WTC11 (cell line): ENCODE measurements at regions of chr2 and their contacts with region 1.

Region 1: DNA sequence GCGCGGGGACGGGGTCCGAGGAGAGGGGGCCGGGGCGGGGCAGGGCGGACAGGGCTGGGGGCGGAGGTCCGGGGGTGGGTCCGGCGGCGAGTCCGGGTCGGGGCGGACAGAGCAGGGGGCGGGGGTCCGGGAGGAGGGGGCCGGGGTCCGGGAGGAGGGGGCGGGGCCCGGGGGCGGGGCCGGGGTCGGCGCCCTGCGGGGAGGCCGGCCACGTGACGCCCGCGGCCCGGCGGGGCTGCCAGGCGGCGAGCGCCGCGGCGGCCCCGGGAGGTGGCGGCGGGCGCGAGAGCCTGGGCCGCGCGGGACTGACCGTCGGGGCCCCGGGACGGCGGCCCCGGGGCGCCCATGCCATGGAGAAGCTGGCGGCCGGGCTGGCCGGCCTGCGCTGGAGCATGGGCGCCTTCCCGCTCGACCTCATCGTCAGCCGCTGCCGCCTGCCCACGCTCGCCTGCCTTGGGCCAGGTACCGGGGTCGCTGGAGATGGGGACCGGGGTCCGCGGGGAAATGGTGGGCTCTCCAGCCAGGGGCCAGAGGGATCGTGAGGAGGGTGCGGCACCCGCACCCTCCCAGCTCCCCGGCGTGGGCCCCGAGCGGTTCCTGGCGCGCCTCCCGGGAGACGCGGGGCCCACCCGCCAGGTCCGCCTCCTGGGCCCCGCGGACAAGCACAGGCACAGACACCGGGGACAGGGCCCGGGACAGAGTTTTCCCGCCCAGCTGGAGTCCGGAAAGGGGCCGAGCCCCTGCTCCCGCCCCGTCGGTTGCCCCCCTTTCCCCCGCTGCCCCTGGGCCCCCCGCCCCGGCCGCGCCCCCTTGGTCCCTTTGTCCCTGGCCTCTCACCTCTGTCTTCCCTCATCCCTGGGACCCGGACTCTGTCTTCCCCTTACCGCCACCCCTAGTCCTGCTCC is at the start of gene GAREM2:
- DNase-seq: peak; percentile 54
- ATAC-seq: peak; percentile 11
- H3K4me3 Mint-ChIP-seq: peak within 1 kb of the TSS; percentile 73
- H3K27ac Mint-ChIP-seq: no peak within 1 kb of the TSS
- H3K4me1 Mint-ChIP-seq: peaks cover 9% of the 10 kb centered on the region
- H3K27me3 Mint-ChIP-seq: peaks cover 11% of the 10 kb centered on the region
- CTCF ChIP-seq: no peak
- total RNA-seq, gene GAREM2: 17.4 to 18.9 TPM (median 17.6 TPM) in 3 replicates

Region 2: DNA sequence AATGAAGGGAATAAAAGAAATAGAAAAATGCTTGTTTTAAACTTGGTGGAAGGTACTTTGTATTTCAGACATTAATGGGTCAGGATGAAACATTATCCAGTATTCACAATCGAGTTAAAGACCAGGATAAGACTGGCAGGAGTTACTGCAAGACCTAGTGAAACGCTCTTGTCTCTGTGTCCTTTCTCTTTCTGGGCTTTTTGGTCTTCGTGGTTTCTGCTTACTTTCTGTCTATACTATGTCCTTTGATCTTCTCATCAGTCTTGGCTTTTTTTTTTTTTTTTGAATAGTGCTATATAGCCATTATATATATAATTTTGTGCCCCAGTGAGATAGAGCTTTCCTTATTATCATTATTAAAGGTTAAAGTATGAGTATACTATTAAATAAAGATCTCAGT is 42.4 kb before region 1 on chr2:
- CTCF ChIA-PET with region 1: no interaction called
- POLR2A ChIA-PET with region 1: no interaction called
- DNase-seq: no peak
- ATAC-seq: no peak
- H3K4me3 Mint-ChIP-seq: no peak overlapping the region
- H3K27ac Mint-ChIP-seq: no peak overlapping the region
- H3K4me1 Mint-ChIP-seq: peaks cover 44% of the 10 kb centered on the region
- H3K27me3 Mint-ChIP-seq: no peaks in the 10 kb centered on the region
- CTCF ChIP-seq: no peak

Region 3: GRCh38 chr2:26144953-26145680 is 28.0 kb before region 1 on chr2:
- CTCF ChIA-PET with region 1: no interaction called
- POLR2A ChIA-PET with region 1: no interaction called
- DNase-seq: peak; percentile 74
- ATAC-seq: peak; percentile 76
- H3K4me3 Mint-ChIP-seq: no peak overlapping the region
- H3K27ac Mint-ChIP-seq: no peak overlapping the region
- H3K4me1 Mint-ChIP-seq: peaks cover 4% of the 10 kb centered on the region
- H3K27me3 Mint-ChIP-seq: no peaks in the 10 kb centered on the region
- CTCF ChIP-seq: peak; percentile 65

Region 4: GRCh38 chr2:26184555-26185303 is 11.6 kb after region 1 on chr2:
- CTCF ChIA-PET with region 1: interaction called, 53 read pairs
- POLR2A ChIA-PET with region 1: interaction called, 3 read pairs
- DNase-seq: peak; percentile 82
- ATAC-seq: peak; percentile 77
- H3K4me3 Mint-ChIP-seq: peak overlapping the region; percentile 66
- H3K27ac Mint-ChIP-seq: no peak overlapping the region
- H3K4me1 Mint-ChIP-seq: peaks cover 24% of the 10 kb centered on the region
- H3K27me3 Mint-ChIP-seq: peaks cover 19% of the 10 kb centered on the region
- CTCF ChIP-seq: peak; percentile 56; the same call in 1 of the 2 replicates

Region 5: DNA sequence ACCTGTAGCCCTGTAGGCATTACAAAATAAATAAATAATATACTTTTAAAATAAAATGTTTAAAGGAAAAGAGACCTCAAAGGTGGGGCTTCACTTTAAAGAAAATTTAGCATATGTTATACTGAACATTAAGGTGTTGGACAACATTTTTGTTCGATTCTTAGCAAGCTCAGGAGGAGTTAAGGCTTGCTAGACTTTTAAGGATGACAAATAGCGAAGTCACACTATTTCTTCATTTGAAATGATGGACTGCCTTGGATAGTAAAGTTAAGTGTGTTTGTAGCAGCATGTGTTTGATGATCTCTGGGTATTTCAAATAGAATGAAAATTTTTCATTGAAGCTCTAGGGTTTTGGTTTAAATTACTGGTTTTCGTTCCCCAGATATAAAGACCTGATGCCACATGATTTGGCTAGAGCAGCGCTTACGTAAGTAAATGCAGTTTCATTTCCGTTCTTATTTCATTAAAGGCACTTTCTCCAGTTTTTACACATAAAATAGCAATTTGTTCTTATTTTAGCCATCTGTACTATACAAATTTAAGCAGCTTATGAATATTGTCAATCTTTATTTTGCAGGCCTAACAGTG is 96.5 kb after region 1 on chr2:
- CTCF ChIA-PET with region 1: no interaction called
- POLR2A ChIA-PET with region 1: no interaction called
- DNase-seq: no peak
- ATAC-seq: no peak
- H3K4me3 Mint-ChIP-seq: no peak overlapping the region
- H3K27ac Mint-ChIP-seq: no peak overlapping the region
- H3K4me1 Mint-ChIP-seq: no peaks in the 10 kb centered on the region
- H3K27me3 Mint-ChIP-seq: no peaks in the 10 kb centered on the region
- CTCF ChIP-seq: no peak